Breast epithelium (tissue), 4 donors: ENCODE measurements at regions of chr5 and their contacts with region 1.

Region 1: GRCh38 chr5:122541388-122541787 is 229.4 kb downstream of the SNCAIP start:
- DNase-seq: no peak
- H3K4me3 ChIP-seq: no peak overlapping the region
- H3K27ac ChIP-seq: no peak overlapping the region
- H3K4me1 ChIP-seq: no peaks in the 10 kb centered on the region
- H3K27me3 ChIP-seq: no peaks in the 10 kb centered on the region
- CTCF ChIP-seq: no peak
- POLR2A ChIP-seq: no peak

Region 2: DNA sequence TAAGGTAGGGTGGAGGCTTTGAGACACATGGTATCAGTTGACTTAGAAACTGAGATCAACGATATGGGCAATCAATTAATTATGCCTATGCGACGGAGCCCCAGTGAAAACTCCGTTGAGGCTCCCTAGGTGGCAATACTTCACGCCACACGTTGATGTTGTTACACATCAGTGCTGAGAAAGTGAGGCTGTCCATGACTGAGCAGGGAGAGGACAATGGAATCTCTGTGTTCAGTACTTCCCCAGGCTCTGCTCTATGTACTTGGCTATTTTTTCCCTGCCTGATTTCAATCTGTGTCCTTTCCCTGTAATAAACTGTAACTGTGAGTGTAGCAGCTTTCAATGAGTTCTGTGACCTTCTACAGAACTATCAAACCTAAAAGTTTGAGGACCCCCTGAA is 17.6 kb before region 1 on chr5:
- intact Hi-C with region 1: loop called (anchors 1 kb)
- DNase-seq: no peak
- H3K4me3 ChIP-seq: no peak overlapping the region
- H3K27ac ChIP-seq: no peak overlapping the region
- H3K4me1 ChIP-seq: no peaks in the 10 kb centered on the region
- H3K27me3 ChIP-seq: no peaks in the 10 kb centered on the region
- CTCF ChIP-seq: no peak
- POLR2A ChIP-seq: no peak

Region 3: GRCh38 chr5:122559676-122560075 is 18.3 kb after region 1 on chr5:
- intact Hi-C with region 1: no loop called
- DNase-seq: no peak
- H3K4me3 ChIP-seq: no peak overlapping the region
- H3K27ac ChIP-seq: no peak overlapping the region
- H3K4me1 ChIP-seq: no peaks in the 10 kb centered on the region
- H3K27me3 ChIP-seq: no peaks in the 10 kb centered on the region
- CTCF ChIP-seq: no peak
- POLR2A ChIP-seq: no peak